Ascending aorta (tissue), 2 donors: ENCODE measurements at regions of chr18 and their contacts with region 1.

Region 1: GRCh38 chr18:24388957-24389356 is 8.7 kb downstream of the OSBPL1A start:
- DNase-seq: no peak
- H3K4me3 ChIP-seq: no peak overlapping the region
- H3K27ac ChIP-seq: no peak overlapping the region
- H3K4me1 ChIP-seq: no peaks in the 10 kb centered on the region
- H3K27me3 ChIP-seq: no peaks in the 10 kb centered on the region
- CTCF ChIP-seq: no peak

Region 2: DNA sequence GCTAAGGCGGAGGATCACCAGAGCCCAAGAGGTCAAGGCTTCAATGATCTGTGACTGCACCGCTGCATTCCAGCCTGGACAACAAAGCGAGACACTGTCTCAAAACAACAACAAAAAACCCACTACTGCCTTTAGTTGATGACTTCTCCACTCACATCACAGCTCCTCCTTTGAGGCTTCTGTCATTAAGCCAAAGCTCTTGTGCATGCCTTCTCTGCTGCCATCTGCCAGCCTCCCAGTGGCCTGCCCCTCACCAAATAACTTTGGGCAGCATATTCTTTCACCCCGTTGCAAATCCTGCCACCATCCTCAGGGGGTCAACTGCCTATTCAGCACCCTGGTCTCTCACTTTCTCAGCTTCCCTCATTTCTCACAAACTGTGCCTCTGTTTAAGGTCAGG is 18.8 kb before region 1 on chr18:
- intact Hi-C with region 1: loop called (anchors 1 kb)
- DNase-seq: no peak
- H3K4me3 ChIP-seq: no peak overlapping the region
- H3K27ac ChIP-seq: no peak overlapping the region
- H3K4me1 ChIP-seq: no peaks in the 10 kb centered on the region
- H3K27me3 ChIP-seq: no peaks in the 10 kb centered on the region
- CTCF ChIP-seq: no peak

Region 3: DNA sequence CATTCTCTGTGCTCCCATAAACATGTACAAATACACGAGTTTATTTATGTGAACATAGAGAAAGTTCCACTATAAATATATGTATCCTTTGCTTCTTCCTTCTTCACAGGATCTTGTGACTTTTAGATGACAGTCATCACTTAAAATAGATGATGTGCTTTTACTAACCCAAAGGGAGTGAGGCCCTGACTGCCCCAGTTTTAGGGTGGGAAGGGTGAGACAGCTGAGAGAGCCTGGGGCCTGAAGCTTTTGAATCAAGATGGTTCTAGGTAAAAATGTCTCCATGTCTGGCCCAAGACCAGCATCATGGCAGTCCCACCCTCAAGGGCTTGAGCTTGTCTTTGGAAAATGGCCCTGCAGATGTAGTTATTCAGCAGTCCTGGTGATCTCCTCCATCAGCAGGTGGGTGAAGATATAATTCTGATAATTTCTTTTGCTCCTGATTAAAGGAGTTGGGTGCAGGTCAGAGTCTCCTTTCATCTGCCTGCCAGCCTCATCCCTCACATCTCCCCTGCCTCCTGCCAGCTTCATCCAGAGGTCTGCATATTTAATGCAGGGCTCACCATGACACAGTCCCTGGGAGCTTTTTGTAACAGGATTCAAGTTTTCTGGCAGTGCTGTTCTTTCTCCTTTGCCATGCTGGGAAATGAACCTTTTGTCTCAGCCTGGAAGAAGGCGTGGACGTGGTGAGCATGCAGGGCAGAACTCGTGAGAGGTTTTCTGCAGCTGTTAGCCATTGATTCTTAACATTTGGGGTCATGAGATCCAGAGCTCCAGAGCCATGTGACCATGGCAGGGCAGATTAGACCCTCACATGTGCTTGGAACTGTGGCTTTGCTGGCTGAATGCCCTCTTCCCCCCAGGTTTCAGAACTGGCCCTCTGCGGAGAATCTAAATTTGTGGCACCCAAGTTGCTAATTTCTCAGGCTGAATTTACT is 74.2 kb after region 1 on chr18:
- intact Hi-C with region 1: no loop called
- DNase-seq: no peak
- H3K4me3 ChIP-seq: no peak overlapping the region
- H3K27ac ChIP-seq: no peak overlapping the region
- H3K4me1 ChIP-seq: no peaks in the 10 kb centered on the region
- H3K27me3 ChIP-seq: no peaks in the 10 kb centered on the region
- CTCF ChIP-seq: no peak

Region 4: DNA sequence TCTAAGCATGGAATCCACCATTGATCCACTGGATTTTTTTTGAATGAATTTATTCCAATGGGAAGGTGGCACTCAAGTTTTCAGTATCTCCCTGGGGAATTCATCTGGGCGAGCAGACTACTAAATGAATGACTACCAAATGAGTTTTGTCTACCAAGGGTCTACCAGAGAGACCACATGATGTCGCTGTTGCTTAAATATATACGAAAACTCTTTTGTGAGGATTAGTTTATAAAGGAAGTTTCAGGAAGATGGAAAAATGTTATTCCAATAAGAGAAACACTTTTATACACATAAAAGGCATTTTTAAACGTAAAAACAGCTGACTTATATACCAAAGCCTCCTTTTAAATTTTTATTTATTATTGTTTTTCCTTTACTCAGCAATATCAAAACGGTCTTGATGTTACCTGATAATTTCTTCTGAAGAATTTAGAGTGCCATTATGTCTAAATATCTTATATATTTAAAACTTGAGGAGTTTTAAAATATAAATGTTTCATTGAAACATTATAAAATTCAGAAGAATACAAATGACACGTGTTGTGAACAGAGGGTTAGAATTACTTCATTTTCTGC is 211.2 kb after region 1 on chr18:
- intact Hi-C with region 1: no loop called
- DNase-seq: no peak
- H3K4me3 ChIP-seq: no peak overlapping the region
- H3K27ac ChIP-seq: no peak overlapping the region
- H3K4me1 ChIP-seq: no peaks in the 10 kb centered on the region
- H3K27me3 ChIP-seq: no peaks in the 10 kb centered on the region
- CTCF ChIP-seq: peak; percentile 12 to 53 (median 38)